ENCODE measurements at regions of chr16 and their contacts with region 1.

Region 1: DNA sequence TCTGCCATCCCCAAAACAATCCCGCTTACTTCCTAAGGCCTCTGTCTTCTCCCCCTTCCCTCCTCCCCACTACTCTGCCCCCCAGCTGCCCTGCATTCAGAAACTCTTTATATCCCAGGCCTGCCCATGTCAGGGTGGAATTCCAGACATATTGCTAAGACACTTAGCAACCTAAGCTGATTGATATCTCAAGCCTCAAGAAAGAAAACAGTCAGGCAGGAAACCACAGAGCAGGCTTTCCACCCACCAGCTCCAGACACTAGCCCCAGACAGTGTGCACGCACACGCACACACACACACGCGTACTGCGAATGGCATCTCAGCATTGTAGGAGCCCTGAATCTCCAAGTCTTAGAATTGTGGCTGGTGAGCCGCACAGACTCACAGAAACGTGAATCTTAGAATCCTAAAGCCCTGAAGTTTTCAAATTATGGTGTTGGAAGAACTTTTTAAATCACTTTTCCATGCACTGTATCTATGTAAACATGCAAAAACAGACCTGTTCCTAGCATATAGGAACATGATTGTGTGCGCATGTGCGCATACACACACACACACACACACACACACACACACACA is 8.8 kb upstream of the LPCAT2 start:
- DNase-seq: peak; percentile 96
- H3K4me3 ChIP-seq: no peak overlapping the region
- H3K27ac ChIP-seq: peak overlapping the region; percentile 82
- H3K4me1 ChIP-seq: peaks cover 65% of the 10 kb centered on the region
- H3K27me3 ChIP-seq: no peaks in the 10 kb centered on the region
- CTCF ChIP-seq: no peak

Region 2: DNA sequence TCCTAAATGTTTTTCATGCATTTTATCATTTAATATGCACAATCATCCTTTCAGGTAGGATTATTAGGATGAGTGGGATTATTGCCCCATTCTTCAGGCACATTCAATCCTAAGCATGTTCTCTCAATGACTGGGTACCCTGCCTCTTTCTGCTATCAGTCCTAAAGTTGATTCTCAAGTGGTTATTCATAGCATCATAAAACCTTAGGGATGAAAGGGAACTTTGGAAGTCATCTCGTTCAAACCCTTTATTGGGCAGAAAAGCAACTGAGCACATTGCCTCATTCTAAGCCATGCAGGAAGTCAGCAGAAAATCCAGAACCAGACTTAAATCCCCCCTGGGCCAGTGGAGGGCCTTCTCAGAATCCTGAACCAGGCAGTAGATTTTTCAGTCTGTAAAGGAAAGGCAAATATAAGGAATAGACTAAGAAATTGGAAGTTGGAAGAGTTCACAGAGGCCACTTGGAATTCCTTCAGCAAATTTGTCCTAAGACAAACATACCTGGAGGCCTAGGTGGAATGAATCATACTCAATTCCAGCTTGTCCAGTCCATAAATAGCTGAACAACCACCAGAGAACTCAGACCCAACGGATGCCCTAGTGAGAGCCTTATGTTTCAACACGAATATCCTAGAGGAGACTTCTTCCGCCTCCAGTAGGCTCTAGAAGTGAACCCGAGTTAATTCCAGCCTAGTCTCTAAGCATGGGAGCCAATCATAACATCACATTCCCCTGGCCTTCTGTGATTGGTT is 113.3 kb before region 1 on chr16:
- CTCF ChIA-PET with region 1: no interaction called
- dilution Hi-C with region 1: no loop called
- in situ Hi-C with region 1: no loop called
- intact Hi-C with region 1: no loop called
- DNase-seq: peak; percentile 77
- H3K4me3 ChIP-seq: no peak overlapping the region
- H3K27ac ChIP-seq: peak overlapping the region; percentile 54
- H3K4me1 ChIP-seq: peaks cover 45% of the 10 kb centered on the region
- H3K27me3 ChIP-seq: no peaks in the 10 kb centered on the region
- CTCF ChIP-seq: no peak

Region 3: GRCh38 chr16:55471448-55472097 is 28.5 kb before region 1 on chr16:
- CTCF ChIA-PET with region 1: no interaction called
- dilution Hi-C with region 1: no loop called
- in situ Hi-C with region 1: no loop called
- intact Hi-C with region 1: no loop called
- DNase-seq: peak; percentile 77
- H3K4me3 ChIP-seq: no peak overlapping the region
- H3K27ac ChIP-seq: peak overlapping the region; percentile 69
- H3K4me1 ChIP-seq: peaks cover 32% of the 10 kb centered on the region
- H3K27me3 ChIP-seq: no peaks in the 10 kb centered on the region
- CTCF ChIP-seq: no peak

Region 4: DNA sequence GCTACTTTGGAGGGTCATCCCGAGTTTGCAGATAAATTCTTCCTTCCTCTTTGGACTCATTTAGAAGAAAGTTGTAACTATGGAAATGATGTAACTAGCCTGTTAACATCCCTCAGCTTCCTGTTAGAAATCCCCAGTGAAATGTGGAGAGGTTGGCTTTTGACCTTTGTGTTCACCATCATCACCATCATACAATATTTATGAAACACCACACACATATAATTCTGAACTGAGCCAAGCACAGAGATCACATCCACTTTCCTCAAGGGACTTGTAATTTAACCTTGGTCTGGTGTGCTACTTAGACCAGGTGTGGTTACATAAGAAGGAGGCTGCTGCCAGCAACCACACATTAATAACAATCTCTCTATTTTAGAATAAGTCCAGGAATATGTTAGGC is 69.0 kb after region 1 on chr16:
- CTCF ChIA-PET with region 1: interaction called, 7 read pairs
- dilution Hi-C with region 1: no loop called
- in situ Hi-C with region 1: no loop called
- intact Hi-C with region 1: loop called (anchors 2 kb)
- DNase-seq: peak; percentile 57
- H3K4me3 ChIP-seq: no peak overlapping the region
- H3K27ac ChIP-seq: peak overlapping the region; percentile 96
- H3K4me1 ChIP-seq: peaks cover 40% of the 10 kb centered on the region
- H3K27me3 ChIP-seq: no peaks in the 10 kb centered on the region
- CTCF ChIP-seq: no peak